Endothelial cell of umbilical vein (primary cell): ENCODE measurements at regions of chr10 and their contacts with region 1.

Region 1: GRCh38 chr10:85642421-85643170 is 724.0 kb downstream of the GRID1 start:
- DNase-seq: peak; percentile 66
- H3K4me3 ChIP-seq: peak overlapping the region in 1 of 3 experiments; percentile 22
- H3K27ac ChIP-seq: peak overlapping the region; percentile 98
- H3K4me1 ChIP-seq: peaks cover 44% of the 10 kb centered on the region
- H3K27me3 ChIP-seq: no peaks in the 10 kb centered on the region
- CTCF ChIP-seq: no peak
- POLR2A ChIP-seq: no peak

Region 2: GRCh38 chr10:85548034-85548433 is 94.6 kb before region 1 on chr10:
- CTCF ChIA-PET with region 1: no interaction called
- POLR2A ChIA-PET with region 1: no interaction called
- dilution Hi-C with region 1: no loop called
- intact Hi-C with region 1: loop called (anchors 5 kb)
- DNase-seq: peak; percentile 9
- H3K4me3 ChIP-seq: no peak overlapping the region
- H3K27ac ChIP-seq: no peak overlapping the region
- H3K4me1 ChIP-seq: no peaks in the 10 kb centered on the region
- H3K27me3 ChIP-seq: no peaks in the 10 kb centered on the region
- CTCF ChIP-seq: peak; percentile 20 to 35
- POLR2A ChIP-seq: no peak

Region 3: GRCh38 chr10:85713885-85714284 is 71.3 kb after region 1 on chr10:
- CTCF ChIA-PET with region 1: no interaction called
- POLR2A ChIA-PET with region 1: no interaction called
- dilution Hi-C with region 1: no loop called
- intact Hi-C with region 1: no loop called
- DNase-seq: no peak
- H3K4me3 ChIP-seq: no peak overlapping the region
- H3K27ac ChIP-seq: no peak overlapping the region
- H3K4me1 ChIP-seq: no peaks in the 10 kb centered on the region
- H3K27me3 ChIP-seq: no peaks in the 10 kb centered on the region
- CTCF ChIP-seq: no peak
- POLR2A ChIP-seq: no peak

Region 4: DNA sequence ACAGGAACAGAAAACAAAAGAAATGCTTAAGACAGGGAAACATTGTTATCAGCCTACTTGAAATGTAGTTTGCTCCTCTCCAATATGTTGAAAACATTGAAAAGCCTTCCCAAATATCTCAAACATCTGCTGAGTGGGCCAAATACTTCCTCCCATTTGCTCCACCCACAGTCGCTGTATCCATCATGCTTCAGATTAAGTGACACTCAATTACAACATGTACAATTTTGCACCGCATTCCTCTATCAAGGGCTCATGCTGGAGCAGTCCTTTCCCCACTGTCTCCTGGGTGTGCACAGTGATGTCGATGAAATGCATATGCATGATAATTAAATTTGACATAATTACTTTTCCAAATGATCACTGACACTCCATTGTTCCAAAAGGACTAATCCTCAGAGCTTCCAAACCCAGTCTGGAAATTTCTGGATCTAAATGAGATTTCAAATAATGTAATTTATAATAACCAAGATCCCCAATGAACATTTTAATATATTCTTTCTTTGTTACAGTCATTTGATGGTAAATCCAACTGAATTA is 119.4 kb after region 1 on chr10:
- CTCF ChIA-PET with region 1: no interaction called
- POLR2A ChIA-PET with region 1: no interaction called
- dilution Hi-C with region 1: no loop called
- intact Hi-C with region 1: no loop called
- DNase-seq: no peak
- H3K4me3 ChIP-seq: no peak overlapping the region
- H3K27ac ChIP-seq: no peak overlapping the region
- H3K4me1 ChIP-seq: no peaks in the 10 kb centered on the region
- H3K27me3 ChIP-seq: no peaks in the 10 kb centered on the region
- CTCF ChIP-seq: no peak
- POLR2A ChIP-seq: no peak

Region 5: DNA sequence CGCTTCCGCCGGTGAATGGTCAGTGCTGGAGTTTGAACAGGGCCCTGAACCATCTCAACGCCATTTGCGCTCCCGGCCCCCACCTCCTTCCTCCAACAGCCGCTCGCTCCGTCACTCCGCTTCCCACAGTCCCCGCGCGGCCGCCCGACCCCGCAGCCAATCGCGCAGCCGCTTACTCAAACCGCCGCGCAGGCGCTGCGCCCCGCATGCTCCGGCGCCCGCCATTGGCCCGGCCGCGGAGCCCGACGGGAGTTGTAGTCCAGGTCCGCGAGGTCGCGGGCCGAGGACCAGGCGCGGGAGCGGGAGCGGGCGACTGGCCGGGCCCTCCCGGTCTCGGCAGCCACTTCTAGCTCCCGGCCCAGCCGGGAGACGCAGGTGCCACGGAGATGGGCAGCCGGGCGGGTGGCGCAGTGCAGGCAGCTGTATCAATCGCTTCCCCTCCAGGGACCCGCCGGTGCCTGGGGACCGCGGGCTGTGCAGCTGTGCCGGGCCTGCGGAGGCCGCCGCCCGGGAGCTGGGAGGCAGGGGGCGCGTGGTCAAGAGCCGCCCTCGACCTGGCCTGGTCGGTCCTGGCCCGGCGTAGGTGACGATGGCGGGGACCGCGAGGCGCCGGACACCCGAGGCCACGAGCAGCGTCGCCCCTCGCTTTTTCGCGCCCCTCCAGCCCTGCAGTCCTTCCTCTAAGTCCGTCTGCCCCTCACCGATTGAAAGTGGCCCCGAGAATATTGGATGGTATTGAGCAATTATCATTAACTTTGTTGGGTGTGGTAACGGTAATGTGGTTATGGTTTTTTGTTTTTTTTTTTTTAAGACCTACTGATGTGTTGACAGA is 879.3 kb after region 1 on chr10 and contains the start of gene WAPL:
- CTCF ChIA-PET with region 1: no interaction called
- POLR2A ChIA-PET with region 1: no interaction called
- dilution Hi-C with region 1: no loop called
- intact Hi-C with region 1: loop called (anchors 10 kb)
- DNase-seq: peak; percentile 96
- H3K4me3 ChIP-seq: peak within 1 kb of the TSS; percentile 96 to 99 (median 99)
- H3K27ac ChIP-seq: peak within 1 kb of the TSS; percentile 74
- H3K4me1 ChIP-seq: peaks cover 19% of the 10 kb centered on the region
- H3K27me3 ChIP-seq: no peaks in the 10 kb centered on the region
- CTCF ChIP-seq: no peak
- POLR2A ChIP-seq: peak; percentile 63
- total RNA-seq, gene WAPL: 35.1 and 35.3 TPM in 2 replicates